Activated CD4-positive, alpha-beta memory T cell treated with anti-CD3 and anti-CD28 coated beads for 36 hours (primary cell): ENCODE measurements at regions of chr17 and their contacts with region 1.

Region 1: GRCh38 chr17:7687908-7688807 is at the start of gene WRAP53:
- DNase-seq: peak; percentile 98
- H3K4me3 Mint-ChIP-seq: peak within 1 kb of the TSS; percentile 100
- H3K27ac Mint-ChIP-seq: peak within 1 kb of the TSS; percentile 100
- H3K4me1 Mint-ChIP-seq: peaks cover 31% of the 10 kb centered on the region
- H3K27me3 Mint-ChIP-seq: no peaks in the 10 kb centered on the region
- total RNA-seq, gene WRAP53: 20.2 to 23.3 TPM

Region 2: GRCh38 chr17:6936370-6937028 is 751.7 kb before region 1 on chr17:
- CTCF ChIA-PET with region 1: no interaction called
- POLR2A ChIA-PET with region 1: no interaction called
- intact Hi-C with region 1: no loop called
- DNase-seq: peak; percentile 32
- H3K4me3 Mint-ChIP-seq: peak overlapping the region; percentile 31
- H3K27ac Mint-ChIP-seq: no peak overlapping the region
- H3K4me1 Mint-ChIP-seq: peaks cover 3% of the 10 kb centered on the region
- H3K27me3 Mint-ChIP-seq: no peaks in the 10 kb centered on the region

Region 3: DNA sequence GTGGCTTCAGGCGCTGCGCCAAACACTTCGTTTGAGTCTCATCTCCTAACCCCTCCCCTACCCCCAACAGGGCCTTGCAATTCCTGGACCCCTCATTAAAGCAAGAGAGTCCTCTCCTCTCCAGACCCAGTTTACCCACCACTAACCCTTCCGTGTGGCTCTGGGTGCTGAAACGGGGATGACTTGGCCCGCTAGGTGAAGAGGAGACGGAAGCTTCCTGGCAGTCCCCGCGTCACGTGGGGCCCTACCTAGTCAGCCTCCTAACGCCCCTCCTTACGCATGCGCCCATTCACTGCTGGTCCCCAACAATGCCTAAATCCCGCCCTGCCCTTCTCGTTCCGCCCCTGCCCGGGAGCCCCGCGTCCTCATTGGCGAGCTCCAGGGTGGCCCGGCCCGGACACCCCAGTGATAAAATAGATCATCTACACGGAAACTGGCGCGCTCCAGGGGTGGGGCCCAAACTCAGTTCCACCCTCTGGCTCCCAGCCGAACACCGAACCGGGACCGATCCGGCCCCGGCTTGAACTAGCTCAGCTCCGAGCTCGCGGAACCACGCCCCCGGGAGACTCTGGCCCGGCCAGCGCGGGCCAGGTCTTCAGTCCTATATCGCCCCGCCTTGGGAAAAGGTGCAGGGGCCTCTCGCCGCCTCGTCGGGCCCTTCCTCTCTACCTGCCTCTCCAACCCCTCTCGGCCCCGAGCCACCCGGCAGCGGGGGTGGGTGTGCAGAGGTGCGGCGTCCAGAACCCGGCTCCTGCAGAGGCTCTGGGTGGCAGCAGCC is 652.4 kb before region 1 on chr17 and contains the start of gene SLC16A13:
- CTCF ChIA-PET with region 1: no interaction called
- POLR2A ChIA-PET with region 1: no interaction called
- intact Hi-C with region 1: no loop called
- DNase-seq: peak; percentile 99
- H3K4me3 Mint-ChIP-seq: peak within 1 kb of the TSS; percentile 94
- H3K27ac Mint-ChIP-seq: peak within 1 kb of the TSS; percentile 99
- H3K4me1 Mint-ChIP-seq: peaks cover 48% of the 10 kb centered on the region
- H3K27me3 Mint-ChIP-seq: no peaks in the 10 kb centered on the region
- total RNA-seq, gene SLC16A13: 10.4 to 10.7 TPM

Region 4: DNA sequence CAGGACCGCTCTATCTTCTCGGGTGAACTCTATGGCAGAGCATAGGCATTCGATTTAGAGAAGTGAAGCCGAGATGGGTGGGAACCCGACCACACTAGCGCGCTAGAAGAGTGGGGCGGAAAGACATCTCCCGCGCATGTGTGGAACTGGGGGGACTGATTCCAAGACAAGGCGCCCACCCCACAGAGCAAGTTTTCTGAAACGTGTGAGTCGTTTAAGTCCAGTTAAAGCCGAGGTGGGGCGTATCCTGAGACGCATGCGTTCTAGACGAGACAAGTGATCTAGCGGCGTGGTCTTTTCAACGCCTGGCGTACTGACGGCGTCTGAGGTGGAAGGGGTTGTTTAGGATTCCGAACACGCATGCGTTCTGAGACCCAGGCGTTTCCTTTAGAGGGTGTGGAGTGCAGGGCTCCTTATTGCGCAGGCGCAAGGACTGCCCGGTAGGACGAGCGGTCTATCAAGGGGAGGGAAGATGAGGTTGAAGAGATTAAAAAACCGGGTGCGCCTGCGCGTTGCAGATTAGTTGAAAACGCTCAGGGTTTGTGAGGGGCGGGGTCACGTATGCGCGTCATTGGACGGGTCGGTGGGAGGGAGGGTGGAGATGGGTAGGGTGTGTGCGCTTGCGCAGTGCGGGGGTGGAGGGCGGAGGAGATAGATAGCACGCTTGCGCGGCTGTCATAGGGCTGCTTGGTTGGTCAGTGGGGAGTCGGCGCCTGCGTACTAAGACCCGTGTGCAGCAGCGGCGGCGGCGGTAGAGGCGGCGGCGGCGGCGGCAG is 381.1 kb before region 1 on chr17 and contains the start of gene EIF5A:
- CTCF ChIA-PET with region 1: no interaction called
- POLR2A ChIA-PET with region 1: interaction called, 5 read pairs
- intact Hi-C with region 1: loop called (anchors 2 kb)
- DNase-seq: peak; percentile 100
- H3K4me3 Mint-ChIP-seq: peak within 1 kb of the TSS; percentile 85
- H3K27ac Mint-ChIP-seq: peak within 1 kb of the TSS; percentile 97
- H3K4me1 Mint-ChIP-seq: peaks cover 29% of the 10 kb centered on the region
- H3K27me3 Mint-ChIP-seq: peaks cover 2% of the 10 kb centered on the region
- total RNA-seq, gene EIF5A: 774 to 776 TPM

Region 5: GRCh38 chr17:7484067-7484918 is 203.9 kb before region 1 on chr17 and contains the start of gene POLR2A:
- CTCF ChIA-PET with region 1: no interaction called
- POLR2A ChIA-PET with region 1: interaction called, 19 read pairs
- intact Hi-C with region 1: loop called (anchors 5 kb)
- DNase-seq: peak; percentile 97
- H3K4me3 Mint-ChIP-seq: peak within 1 kb of the TSS; percentile 98
- H3K27ac Mint-ChIP-seq: peak within 1 kb of the TSS; percentile 100
- H3K4me1 Mint-ChIP-seq: peaks cover 69% of the 10 kb centered on the region
- H3K27me3 Mint-ChIP-seq: no peaks in the 10 kb centered on the region
- total RNA-seq, gene POLR2A: 180 to 187 TPM

Region 6: DNA sequence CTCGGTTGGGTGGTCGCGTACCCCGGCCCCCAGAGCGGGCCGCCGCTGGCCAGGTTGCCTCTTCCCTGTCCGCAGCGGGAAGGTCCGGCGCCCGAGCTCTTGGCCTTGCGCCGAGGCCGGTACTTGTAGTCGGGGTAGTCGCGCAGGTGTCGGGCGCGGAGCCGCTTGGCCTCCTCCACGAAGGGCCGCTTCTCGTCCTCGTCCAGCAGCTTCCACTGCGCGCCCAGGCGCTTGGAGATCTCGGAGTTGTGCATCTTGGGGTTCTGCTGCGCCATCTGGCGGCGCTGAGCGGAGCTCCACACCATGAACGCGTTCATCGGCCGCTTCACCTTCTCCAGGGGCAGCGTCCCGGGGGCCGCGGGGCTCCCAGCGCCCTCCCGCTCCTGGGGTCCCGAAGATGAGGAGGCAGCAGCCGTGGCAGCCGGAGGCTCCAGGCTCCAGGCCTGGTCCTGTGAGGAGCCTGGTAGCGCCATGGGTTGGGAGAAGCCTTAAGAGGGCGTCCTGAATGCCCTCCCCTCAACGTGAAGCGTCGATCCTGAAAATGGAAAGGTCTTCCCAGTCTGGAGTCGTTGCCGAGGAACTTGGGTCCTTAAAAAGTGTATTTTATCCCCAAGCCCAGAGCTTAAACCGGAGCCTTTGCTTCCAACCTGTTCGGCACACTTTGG is 98.8 kb before region 1 on chr17:
- CTCF ChIA-PET with region 1: interaction called, 30 read pairs
- POLR2A ChIA-PET with region 1: interaction called, 56 read pairs
- intact Hi-C with region 1: no loop called
- DNase-seq: peak; percentile 74
- H3K4me3 Mint-ChIP-seq: no peak overlapping the region
- H3K27ac Mint-ChIP-seq: no peak overlapping the region
- H3K4me1 Mint-ChIP-seq: peaks cover 10% of the 10 kb centered on the region
- H3K27me3 Mint-ChIP-seq: no peaks in the 10 kb centered on the region

Region 7: GRCh38 chr17:7650509-7651096 is 37.6 kb before region 1 on chr17 and contains the start of gene ATP1B2:
- CTCF ChIA-PET with region 1: interaction called, 9 read pairs
- POLR2A ChIA-PET with region 1: interaction called, 14 read pairs
- intact Hi-C with region 1: no loop called
- DNase-seq: peak; percentile 79
- H3K4me3 Mint-ChIP-seq: peak within 1 kb of the TSS; percentile 56
- H3K27ac Mint-ChIP-seq: no peak within 1 kb of the TSS
- H3K4me1 Mint-ChIP-seq: peaks cover 14% of the 10 kb centered on the region
- H3K27me3 Mint-ChIP-seq: peaks cover 37% of the 10 kb centered on the region
- total RNA-seq, gene ATP1B2: 0.12 to 0.26 TPM

Region 8: GRCh38 chr17:7856883-7857723 is 168.9 kb after region 1 on chr17 and contains the start of gene NAA38:
- CTCF ChIA-PET with region 1: interaction called, 3 read pairs
- POLR2A ChIA-PET with region 1: interaction called, 6 read pairs
- intact Hi-C with region 1: loop called (anchors 1 kb)
- DNase-seq: peak; percentile 97
- H3K4me3 Mint-ChIP-seq: no peak within 1 kb of the TSS
- H3K27ac Mint-ChIP-seq: no peak within 1 kb of the TSS
- H3K4me1 Mint-ChIP-seq: peaks cover 24% of the 10 kb centered on the region
- H3K27me3 Mint-ChIP-seq: no peaks in the 10 kb centered on the region
- total RNA-seq, gene NAA38: 68.2 to 74.7 TPM